Activated CD4-positive, alpha-beta T cell treated with anti-CD3 and anti-CD28 coated beads, Interleukin-2, amount 10 ng/mL, durations not matched to agents 24 days and 14 days (primary cell): ENCODE measurements at regions of chr6 and their contacts with region 1.

Region 1: GRCh38 chr6:26285143-26286134 is 79.6 kb upstream of the BTN3A2 start:
- DNase-seq: peak; percentile 99
- H3K4me3 Mint-ChIP-seq: peak overlapping the region; percentile 87
- H3K27ac Mint-ChIP-seq: peak overlapping the region; percentile 96
- H3K4me1 Mint-ChIP-seq: peaks cover 45% of the 10 kb centered on the region
- H3K27me3 Mint-ChIP-seq: peaks cover 7% of the 10 kb centered on the region

Region 2: DNA sequence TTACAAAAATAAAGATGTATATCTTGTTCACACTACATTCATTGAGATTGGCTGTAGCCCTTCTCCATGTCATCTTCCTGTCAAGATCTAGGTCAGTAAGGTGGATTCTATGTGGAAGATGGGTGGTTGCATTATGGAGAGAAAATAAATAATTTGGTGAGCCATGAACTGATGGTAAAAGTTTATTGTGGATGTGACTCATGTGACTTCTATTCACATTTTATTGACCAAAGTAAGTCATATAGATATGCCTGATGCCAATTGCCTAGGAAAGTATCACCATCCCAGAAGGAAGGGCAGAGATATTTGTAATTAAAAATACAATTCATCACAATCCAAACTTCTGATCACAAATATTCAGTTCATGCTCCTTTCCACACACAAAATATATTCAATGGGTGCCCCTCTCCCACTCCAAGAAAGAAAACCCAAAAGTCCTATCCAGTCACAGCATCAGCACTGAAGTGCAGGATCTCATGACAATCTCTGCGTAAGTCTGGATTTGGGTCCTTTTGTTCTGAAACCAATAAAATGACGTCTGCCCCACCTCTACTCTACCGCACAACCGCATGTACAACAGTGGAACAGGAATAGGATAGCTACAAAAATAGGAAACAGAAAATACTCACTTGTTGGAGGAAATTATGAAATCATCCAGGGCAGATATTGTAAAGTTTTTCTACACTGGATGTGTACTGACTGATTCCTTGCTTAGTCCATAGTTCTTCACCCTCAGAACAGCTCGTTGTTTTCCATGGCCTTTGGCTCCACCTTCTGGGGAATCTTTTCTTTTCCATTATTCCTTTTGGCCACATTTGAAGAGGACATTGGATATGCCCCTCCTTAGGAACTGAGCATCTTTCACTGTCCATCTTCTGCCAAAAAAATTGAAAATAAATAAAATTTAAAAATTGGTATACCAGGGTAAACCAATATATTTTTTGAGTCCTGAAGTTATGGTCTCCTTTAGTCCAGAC is 395.3 kb before region 1 on chr6:
- intact Hi-C with region 1: no loop called
- DNase-seq: peak; percentile 72
- H3K4me3 Mint-ChIP-seq: no peak overlapping the region
- H3K27ac Mint-ChIP-seq: no peak overlapping the region
- H3K4me1 Mint-ChIP-seq: no peaks in the 10 kb centered on the region
- H3K27me3 Mint-ChIP-seq: peaks cover 12% of the 10 kb centered on the region

Region 3: DNA sequence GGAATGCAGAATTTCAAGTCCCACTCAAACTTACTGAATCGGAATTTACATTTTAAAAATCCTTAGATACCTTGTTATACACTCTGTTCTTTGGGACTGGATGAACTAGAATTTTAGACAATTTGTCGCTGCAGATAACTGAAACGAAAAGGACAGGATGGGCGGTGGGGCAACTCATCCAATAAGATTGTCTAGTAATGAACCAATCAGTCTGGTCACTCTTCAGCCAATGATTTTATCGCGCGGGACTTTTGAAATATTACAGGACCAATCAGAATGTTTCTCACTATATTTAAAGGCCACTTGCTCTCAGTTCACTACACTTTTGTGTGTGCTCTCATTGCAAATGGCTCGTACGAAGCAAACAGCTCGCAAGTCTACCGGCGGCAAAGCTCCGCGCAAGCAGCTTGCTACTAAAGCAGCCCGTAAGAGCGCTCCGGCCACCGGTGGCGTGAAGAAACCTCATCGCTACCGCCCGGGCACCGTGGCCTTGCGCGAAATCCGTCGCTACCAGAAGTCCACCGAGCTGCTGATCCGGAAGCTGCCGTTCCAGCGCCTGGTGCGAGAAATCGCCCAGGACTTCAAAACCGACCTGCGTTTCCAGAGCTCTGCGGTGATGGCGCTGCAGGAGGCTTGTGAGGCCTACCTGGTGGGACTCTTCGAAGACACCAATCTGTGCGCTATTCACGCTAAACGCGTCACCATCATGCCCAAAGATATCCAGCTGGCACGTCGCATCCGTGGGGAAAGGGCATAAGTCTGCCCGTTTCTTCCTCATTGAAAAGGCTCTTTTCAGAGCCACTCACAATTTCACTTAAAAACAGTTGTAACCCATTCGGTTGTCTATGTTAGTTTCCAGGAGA is 240.1 kb before region 1 on chr6:
- intact Hi-C with region 1: loop called (anchors 5 kb)
- DNase-seq: peak; percentile 96
- H3K4me3 Mint-ChIP-seq: peak overlapping the region; percentile 86
- H3K27ac Mint-ChIP-seq: peak overlapping the region; percentile 99
- H3K4me1 Mint-ChIP-seq: peaks cover 33% of the 10 kb centered on the region
- H3K27me3 Mint-ChIP-seq: no peaks in the 10 kb centered on the region

Region 4: DNA sequence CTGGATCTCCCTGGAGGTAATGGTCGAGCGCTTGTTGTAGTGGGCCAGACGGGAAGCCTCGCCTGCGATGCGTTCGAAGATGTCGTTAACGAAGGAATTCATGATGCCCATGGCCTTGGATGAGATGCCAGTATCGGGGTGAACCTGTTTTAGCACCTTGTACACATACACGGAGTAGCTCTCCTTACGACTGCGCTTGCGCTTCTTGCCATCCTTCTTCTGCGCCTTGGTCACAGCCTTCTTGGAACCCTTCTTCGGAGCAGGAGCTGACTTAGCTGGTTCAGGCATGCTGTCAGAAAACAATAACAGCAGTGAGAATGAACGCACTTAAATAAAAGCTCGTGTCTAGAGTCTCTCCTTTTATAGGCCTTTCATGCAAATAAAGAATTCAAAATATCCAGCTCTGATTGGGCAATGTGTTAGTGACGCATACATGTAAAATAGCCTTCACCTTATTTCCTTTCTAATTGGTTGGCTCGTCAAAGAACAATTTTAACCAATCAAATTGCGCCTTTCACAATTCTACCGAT is 69.0 kb before region 1 on chr6:
- intact Hi-C with region 1: loop called (anchors 1 kb)
- DNase-seq: peak; percentile 96
- H3K4me3 Mint-ChIP-seq: no peak overlapping the region
- H3K27ac Mint-ChIP-seq: no peak overlapping the region
- H3K4me1 Mint-ChIP-seq: peaks cover 27% of the 10 kb centered on the region
- H3K27me3 Mint-ChIP-seq: no peaks in the 10 kb centered on the region

Region 5: GRCh38 chr6:26249957-26250697 is 35.3 kb before region 1 on chr6:
- intact Hi-C with region 1: loop called (anchors 1 kb)
- DNase-seq: peak; percentile 92
- H3K4me3 Mint-ChIP-seq: peak overlapping the region; percentile 95
- H3K27ac Mint-ChIP-seq: peak overlapping the region; percentile 95
- H3K4me1 Mint-ChIP-seq: peaks cover 37% of the 10 kb centered on the region
- H3K27me3 Mint-ChIP-seq: no peaks in the 10 kb centered on the region

Region 6: DNA sequence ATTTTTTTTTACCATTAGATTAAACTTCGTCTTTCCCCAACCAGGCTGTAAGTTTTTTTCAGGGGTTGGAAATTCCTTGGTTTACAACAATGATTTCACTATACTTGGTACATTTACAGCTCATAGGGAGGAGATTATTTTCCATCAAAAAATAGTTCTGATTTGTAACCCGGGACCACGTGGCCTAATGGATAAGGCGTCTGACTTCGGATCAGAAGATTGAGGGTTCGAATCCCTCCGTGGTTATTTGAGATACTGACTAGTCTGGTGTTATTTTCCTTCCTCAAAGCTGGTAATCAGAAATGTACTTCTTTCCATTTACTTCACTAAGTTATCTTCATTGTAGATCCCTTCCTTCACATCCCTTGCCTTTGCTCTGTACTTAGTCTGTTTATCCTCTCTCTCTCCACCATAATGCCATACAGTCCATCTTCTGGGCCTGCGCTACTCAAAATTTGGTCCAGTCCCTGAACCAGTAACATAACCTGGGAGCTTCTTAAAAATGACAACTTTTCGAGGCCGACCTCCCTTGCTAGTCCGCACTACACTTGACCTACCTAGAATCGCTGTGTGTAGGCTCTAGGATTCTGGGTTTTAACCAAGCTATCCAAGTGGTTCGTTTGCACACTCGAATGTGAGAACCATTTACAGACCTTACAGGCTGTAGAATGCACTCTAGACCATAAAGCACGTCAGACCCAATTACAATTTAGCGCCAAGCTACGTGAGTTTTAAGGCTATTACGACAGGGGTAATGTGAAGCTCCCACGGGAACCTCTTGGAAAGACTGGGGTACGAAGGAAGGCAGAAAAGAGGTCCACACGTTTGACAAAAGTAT is 37.4 kb after region 1 on chr6:
- intact Hi-C with region 1: loop called (anchors 2 kb)
- DNase-seq: peak; percentile 92
- H3K4me3 Mint-ChIP-seq: peak overlapping the region; percentile 89
- H3K27ac Mint-ChIP-seq: peak overlapping the region; percentile 93
- H3K4me1 Mint-ChIP-seq: peaks cover 37% of the 10 kb centered on the region
- H3K27me3 Mint-ChIP-seq: peaks cover 6% of the 10 kb centered on the region

Region 7: GRCh38 chr6:27132532-27133280 is 847.3 kb after region 1 on chr6:
- intact Hi-C with region 1: loop called (anchors 1 kb)
- DNase-seq: peak; percentile 98
- H3K4me3 Mint-ChIP-seq: no peak overlapping the region
- H3K27ac Mint-ChIP-seq: no peak overlapping the region
- H3K4me1 Mint-ChIP-seq: peaks cover 37% of the 10 kb centered on the region
- H3K27me3 Mint-ChIP-seq: no peaks in the 10 kb centered on the region